ENCODE measurements at regions of chr1 and their contacts with region 1.

Region 1: DNA sequence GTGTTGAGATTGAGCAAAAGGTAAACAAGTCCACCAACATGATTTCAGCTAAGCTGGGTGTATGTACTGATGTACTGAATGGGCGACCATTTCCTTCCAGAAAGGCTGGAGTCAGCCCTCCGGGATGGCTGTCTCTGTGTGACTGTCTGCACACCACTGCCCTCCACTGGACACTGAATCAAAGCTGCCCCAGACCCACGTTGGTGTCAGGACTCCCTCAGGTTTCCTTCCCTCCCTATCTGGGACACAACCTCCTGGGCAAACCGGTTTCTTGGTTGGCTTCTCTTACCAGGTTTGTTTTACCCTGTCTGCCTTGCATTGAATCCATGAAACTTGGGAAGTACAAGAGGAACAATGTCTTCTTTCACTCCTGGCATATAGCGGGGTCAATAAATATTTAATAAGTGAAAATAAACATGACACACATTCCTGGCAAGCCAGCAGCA is 5.3 kb upstream of the SRP9 start:
- DNase-seq: peak; percentile 64
- CTCF ChIP-seq: peak; percentile 51

Region 2: DNA sequence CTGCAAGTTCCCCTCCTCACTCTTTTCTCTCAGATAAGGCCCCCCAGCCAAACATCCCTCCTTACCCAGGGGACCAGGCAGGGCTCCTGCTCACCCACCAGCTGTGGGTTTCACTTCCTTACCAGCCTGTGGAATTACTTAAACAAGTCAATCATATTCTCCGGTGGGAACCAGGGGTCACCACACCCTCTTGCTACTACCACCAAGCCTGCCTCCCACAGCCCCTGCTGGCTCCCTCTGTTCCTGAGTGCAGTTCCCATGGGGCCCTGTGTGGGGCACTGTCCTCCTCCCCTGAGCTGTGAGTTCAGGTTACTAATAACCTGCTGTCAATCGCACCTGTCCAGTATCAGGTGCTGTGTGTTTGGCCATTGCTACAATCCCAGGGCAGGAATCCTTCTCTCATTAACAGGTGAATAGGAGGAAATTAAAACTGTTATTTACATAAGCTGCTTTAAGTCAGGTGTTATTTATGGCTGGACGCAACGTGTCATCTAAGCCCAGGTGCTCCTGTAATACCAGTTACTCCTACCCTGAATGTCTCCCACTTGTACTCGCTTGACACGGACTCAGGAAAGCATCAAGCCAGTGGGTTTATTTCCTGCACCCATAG is 291.4 kb before region 1 on chr1:
- CTCF ChIA-PET with region 1: interaction called, 23 read pairs
- POLR2A ChIA-PET with region 1: no interaction called
- DNase-seq: peak; percentile 70
- CTCF ChIP-seq: peak; percentile 75

Region 3: DNA sequence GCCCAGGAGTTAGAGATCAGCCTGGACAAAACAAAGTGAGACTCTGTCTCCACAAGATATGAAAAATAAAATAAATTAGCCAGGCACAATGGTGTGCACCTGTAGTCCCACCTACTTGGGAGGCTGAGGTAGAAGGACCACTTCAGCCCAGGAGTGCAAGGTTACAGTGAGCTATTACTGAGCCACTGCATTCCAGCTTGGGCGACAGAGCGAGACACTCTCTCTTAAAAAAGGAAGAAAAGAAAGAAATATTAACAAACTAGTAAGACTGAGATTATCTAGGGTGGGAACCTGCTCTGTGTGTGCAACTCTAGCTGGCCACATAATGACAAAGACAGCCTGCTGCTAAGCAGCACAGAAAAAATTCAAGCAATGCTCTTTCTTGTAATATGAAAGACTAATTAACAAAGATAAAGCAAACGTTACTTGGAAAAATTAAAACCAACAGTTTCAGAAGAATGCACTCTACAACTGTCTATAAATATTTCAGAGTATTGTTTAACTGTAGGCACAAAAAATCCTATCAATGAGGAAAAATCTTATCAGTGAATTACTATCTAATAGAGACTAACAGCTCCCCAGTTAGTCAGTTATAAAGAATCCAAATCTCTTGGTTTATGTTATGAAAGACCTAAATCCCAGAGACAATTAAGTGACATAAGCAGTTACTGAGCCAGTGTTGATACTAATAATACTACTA is 193.9 kb before region 1 on chr1:
- CTCF ChIA-PET with region 1: no interaction called
- POLR2A ChIA-PET with region 1: no interaction called
- DNase-seq: no peak
- CTCF ChIP-seq: no peak

Region 4: GRCh38 chr1:225662155-225662554 is 110.2 kb before region 1 on chr1:
- CTCF ChIA-PET with region 1: no interaction called
- POLR2A ChIA-PET with region 1: no interaction called
- DNase-seq: no peak
- CTCF ChIP-seq: no peak

Measured in GM10248 (cell line).